ENCODE measurements at regions of chr14 and their contacts with region 1.

Region 1: GRCh38 chr14:30982533-30982932 is 42.9 kb upstream of the AP4S1 start:
- DNase-seq: no peak
- H3K4me3 ChIP-seq: no peak overlapping the region
- H3K27ac ChIP-seq: no peak overlapping the region
- H3K4me1 ChIP-seq: no peaks in the 10 kb centered on the region
- H3K27me3 ChIP-seq: no peaks in the 10 kb centered on the region
- CTCF ChIP-seq: no peak
- EP300 ChIP-seq: no peak
- POLR2A ChIP-seq: no peak

Region 2: GRCh38 chr14:30921305-30921704 is 61.2 kb before region 1 on chr14:
- intact Hi-C with region 1: no loop called
- DNase-seq: no peak
- H3K4me3 ChIP-seq: no peak overlapping the region
- H3K27ac ChIP-seq: no peak overlapping the region
- H3K4me1 ChIP-seq: no peaks in the 10 kb centered on the region
- H3K27me3 ChIP-seq: no peaks in the 10 kb centered on the region
- CTCF ChIP-seq: no peak
- EP300 ChIP-seq: no peak
- POLR2A ChIP-seq: no peak

Region 3: GRCh38 chr14:30943694-30944093 is 38.8 kb before region 1 on chr14:
- intact Hi-C with region 1: no loop called
- DNase-seq: no peak
- H3K4me3 ChIP-seq: no peak overlapping the region
- H3K27ac ChIP-seq: no peak overlapping the region
- H3K4me1 ChIP-seq: no peaks in the 10 kb centered on the region
- H3K27me3 ChIP-seq: no peaks in the 10 kb centered on the region
- CTCF ChIP-seq: no peak
- EP300 ChIP-seq: no peak
- POLR2A ChIP-seq: no peak

Region 4: GRCh38 chr14:31084385-31084784 is 101.9 kb after region 1 on chr14:
- intact Hi-C with region 1: loop called (anchors 5 to 10 kb)
- DNase-seq: no peak
- H3K4me3 ChIP-seq: no peak overlapping the region
- H3K27ac ChIP-seq: no peak overlapping the region
- H3K4me1 ChIP-seq: no peaks in the 10 kb centered on the region
- H3K27me3 ChIP-seq: no peaks in the 10 kb centered on the region
- CTCF ChIP-seq: no peak
- EP300 ChIP-seq: no peak
- POLR2A ChIP-seq: no peak

Region 5: GRCh38 chr14:31357279-31357678 is 374.7 kb after region 1 on chr14:
- intact Hi-C with region 1: loop called in 1 of 4 experiments (anchors 5 kb)
- DNase-seq: no peak
- H3K4me3 ChIP-seq: no peak overlapping the region
- H3K27ac ChIP-seq: no peak overlapping the region
- H3K4me1 ChIP-seq: peaks cover 1% of the 10 kb centered on the region
- H3K27me3 ChIP-seq: no peaks in the 10 kb centered on the region
- CTCF ChIP-seq: no peak
- EP300 ChIP-seq: no peak
- POLR2A ChIP-seq: no peak

Measured in ovary (tissue), 10 donors.